ENCODE measurements at regions of chr1 and their contacts with region 1.

Region 1: DNA sequence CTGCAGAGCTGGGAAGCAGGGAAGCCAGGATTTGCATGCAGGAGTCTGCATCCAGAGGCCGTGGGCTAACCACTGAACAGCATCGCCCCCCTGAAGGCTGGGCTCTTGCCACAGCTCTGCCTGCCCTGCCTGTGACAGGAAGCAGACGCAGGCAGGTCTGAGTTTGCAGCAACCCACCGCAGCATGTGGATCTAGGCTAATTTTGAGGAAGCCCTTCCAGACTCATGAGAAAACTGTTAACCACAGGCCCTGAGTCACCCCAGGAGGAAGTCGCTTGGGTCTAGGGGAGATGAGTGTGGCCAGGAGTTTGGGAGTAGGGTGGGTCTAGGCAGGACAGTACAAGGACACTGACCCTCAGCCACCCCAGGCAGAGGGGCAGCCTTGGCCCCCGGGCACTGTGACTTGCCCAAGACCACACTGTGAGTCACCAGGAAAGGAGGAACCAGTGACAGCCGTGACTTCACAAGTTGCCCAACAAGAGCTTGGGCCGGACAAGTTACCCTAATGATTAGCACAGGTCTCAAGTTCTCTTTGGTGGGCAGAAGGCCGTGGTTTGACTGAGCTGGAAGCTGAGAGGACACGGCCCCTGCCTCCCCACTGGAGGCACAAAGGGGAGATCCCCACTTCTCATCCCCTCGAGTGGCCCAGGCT is 904 bp downstream of the LAPTM5 start:
- DNase-seq: peak; percentile 76
- H3K4me3 Mint-ChIP-seq: peak overlapping the region; percentile 96
- H3K27ac Mint-ChIP-seq: peak overlapping the region; percentile 97
- H3K4me1 Mint-ChIP-seq: peaks cover 77% of the 10 kb centered on the region
- H3K27me3 Mint-ChIP-seq: no peaks in the 10 kb centered on the region

Region 2: DNA sequence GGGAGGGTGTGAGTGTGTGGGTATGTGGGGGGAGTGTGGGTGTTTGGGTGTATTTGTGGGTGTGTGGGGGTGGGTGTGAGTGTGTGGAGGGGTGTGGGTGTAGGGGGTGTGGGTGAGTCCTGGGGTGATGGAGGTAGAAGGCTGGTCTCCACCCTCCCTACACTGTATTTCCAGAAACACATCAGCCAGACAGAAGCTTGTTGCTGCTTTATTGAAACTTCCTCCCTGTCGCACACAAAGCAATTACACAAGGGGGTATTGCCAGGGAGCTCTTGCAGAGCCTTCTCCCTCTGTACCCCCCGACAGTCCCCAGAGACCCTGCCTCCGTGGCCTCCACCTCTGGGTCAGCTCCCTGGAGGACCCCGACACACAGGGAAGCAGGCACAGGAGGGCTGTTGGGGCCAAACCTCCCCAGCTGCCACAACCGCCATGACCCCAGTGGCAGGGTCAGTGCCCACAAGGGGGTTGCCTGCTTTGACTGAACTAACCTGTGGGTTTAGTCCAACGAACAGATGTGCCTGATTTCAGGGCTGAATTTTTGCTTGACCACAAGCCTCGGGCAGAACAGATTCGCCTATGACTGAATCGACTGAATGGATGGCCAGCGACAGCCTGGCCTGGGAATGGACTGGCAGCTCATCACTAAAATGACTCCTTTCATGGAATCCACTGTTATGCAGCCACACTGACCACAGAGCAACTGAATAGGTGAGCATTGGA is 24.2 kb before region 1 on chr1:
- CTCF ChIA-PET with region 1: interaction called, 15 read pairs
- POLR2A ChIA-PET with region 1: no interaction called
- DNase-seq: no peak
- H3K4me3 Mint-ChIP-seq: no peak overlapping the region
- H3K27ac Mint-ChIP-seq: peak overlapping the region; percentile 72
- H3K4me1 Mint-ChIP-seq: peaks cover 12% of the 10 kb centered on the region
- H3K27me3 Mint-ChIP-seq: no peaks in the 10 kb centered on the region

Region 3: GRCh38 chr1:30743584-30744059 is 13.0 kb before region 1 on chr1:
- CTCF ChIA-PET with region 1: interaction called, 48 read pairs
- POLR2A ChIA-PET with region 1: interaction called, 7 read pairs
- DNase-seq: peak; percentile 88
- H3K4me3 Mint-ChIP-seq: peak overlapping the region; percentile 68
- H3K27ac Mint-ChIP-seq: peak overlapping the region; percentile 92
- H3K4me1 Mint-ChIP-seq: peaks cover 95% of the 10 kb centered on the region
- H3K27me3 Mint-ChIP-seq: no peaks in the 10 kb centered on the region

Region 4: GRCh38 chr1:30779294-30780071 is 22.8 kb after region 1 on chr1:
- CTCF ChIA-PET with region 1: interaction called, 14 read pairs
- POLR2A ChIA-PET with region 1: no interaction called
- DNase-seq: peak; percentile 90
- H3K4me3 Mint-ChIP-seq: no peak overlapping the region
- H3K27ac Mint-ChIP-seq: no peak overlapping the region
- H3K4me1 Mint-ChIP-seq: peaks cover 25% of the 10 kb centered on the region
- H3K27me3 Mint-ChIP-seq: peaks cover 9% of the 10 kb centered on the region

Measured in activated CD4-positive, alpha-beta T cell treated with anti-CD3 and anti-CD28 coated beads, Interleukin-2, amount 10 ng/mL, durations not matched to agents 7 days and 5 days (primary cell).